Esophagus squamous epithelium (tissue), 5 donors: ENCODE measurements at regions of chr11 and their contacts with region 1.

Region 1: DNA sequence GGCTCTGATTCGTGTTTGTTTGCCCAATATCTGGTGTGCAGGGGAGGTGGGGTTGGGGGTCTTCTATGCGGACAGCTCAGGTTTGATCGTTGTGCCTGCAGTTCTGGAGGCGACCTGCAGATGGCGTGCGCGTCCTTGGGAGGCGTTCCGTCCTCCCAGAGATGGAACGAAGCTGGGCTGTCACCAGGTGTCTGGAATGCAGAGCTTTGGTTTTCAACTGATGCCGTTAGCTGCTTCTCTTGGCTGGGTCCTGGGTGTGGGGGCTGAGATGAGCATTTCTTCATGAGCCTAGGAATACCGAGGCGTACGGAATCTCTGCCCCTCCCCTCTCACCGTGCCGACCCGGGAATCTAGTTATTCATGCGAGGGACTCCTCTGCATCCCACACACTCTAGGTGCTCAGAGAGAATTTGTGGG is 98.6 kb downstream of the CEP164 start:
- DNase-seq: no peak
- H3K4me3 ChIP-seq: peak overlapping the region in 1 of 4 donors; percentile 32
- H3K27ac ChIP-seq: no peak overlapping the region
- H3K4me1 ChIP-seq: peaks cover 0 to 9% (median 0%) of the 10 kb centered on the region in 3 donors
- H3K27me3 ChIP-seq: peaks cover 0 to 23% (median 0%) of the 10 kb centered on the region in 4 donors
- CTCF ChIP-seq: peak; percentile 57 to 96 (median 86)
- POLR2A ChIP-seq: no peak

Region 2: DNA sequence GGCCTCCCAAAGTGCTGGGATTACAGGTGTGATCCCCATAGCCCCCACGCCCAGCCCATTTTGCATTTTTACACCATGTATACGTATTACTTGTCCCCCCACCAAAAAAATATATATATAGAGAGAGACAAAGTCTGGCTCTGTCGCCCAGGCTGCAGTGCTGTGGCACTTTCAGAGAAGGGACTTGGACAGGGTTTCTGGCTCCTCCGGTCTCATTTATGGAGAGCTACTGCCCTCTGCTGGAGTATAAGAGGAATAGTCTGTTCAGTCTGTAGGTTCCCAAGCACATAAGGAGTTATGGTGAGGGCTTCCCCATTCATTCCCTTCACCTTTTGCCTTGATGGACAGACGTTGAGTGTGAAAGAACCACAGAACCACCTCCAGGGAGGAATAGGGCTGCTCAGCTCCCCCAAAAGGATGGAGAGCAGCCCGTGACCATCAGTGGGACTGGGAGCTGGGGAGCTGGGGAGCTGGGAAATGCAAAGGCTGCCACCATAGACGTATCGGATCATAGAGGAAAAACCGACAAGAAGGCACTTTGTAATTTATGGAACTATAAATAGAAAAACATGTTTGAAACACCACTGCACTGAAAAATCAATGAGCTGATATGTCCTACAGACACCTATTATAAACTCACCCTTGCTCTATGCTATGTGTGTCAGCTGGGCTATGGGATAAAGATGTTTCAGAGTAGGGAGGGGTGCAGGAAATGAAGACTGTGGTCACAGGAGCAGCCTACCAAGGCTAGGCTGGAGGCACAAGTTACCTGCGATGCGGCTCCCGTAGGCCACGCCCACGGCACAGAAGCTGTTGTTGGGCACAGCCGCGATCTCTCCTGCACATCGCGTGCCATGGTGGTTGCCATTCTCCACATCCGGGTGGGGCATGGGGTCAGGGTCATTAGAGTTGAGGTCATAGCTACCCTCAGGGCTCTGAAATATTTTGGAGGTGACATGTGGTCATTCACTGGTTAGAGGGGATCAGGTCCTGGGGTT is 199.6 kb before region 1 on chr11:
- intact Hi-C with region 1: no loop called
- DNase-seq: no peak
- H3K4me3 ChIP-seq: no peak overlapping the region
- H3K27ac ChIP-seq: no peak overlapping the region
- H3K4me1 ChIP-seq: peaks cover 15 to 51% (median 17%) of the 10 kb centered on the region in 3 donors
- H3K27me3 ChIP-seq: no peaks in the 10 kb centered on the region
- CTCF ChIP-seq: peak; percentile 52 to 84 (median 77)
- POLR2A ChIP-seq: no peak

Region 3: DNA sequence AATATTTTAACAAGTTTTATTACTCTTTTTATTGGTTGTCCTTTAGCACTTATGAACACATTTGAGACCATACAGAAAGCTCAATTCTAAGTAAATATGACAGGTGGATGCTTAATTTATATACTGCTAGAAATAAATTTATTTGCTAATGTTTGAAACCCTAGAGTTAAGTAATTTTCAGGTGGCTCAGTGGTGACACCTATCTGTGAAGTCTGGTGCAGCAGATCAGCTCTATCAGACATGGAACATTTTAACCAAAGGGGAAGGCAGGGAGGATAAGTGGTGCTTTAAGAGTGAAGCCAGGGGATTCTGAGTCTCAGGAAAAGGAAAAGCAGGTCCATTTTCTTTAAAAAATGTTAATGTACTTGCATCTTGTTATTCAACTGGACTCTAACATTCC is 194.9 kb after region 1 on chr11:
- intact Hi-C with region 1: loop called (anchors 10 kb)
- DNase-seq: no peak
- H3K4me3 ChIP-seq: no peak overlapping the region
- H3K27ac ChIP-seq: no peak overlapping the region
- H3K4me1 ChIP-seq: no peaks in the 10 kb centered on the region
- H3K27me3 ChIP-seq: peaks cover 0 to 24% (median 0%) of the 10 kb centered on the region in 4 donors
- CTCF ChIP-seq: peak in 4 of 6 experiments; percentile 9 to 55 (median 25)
- POLR2A ChIP-seq: no peak

Region 4: DNA sequence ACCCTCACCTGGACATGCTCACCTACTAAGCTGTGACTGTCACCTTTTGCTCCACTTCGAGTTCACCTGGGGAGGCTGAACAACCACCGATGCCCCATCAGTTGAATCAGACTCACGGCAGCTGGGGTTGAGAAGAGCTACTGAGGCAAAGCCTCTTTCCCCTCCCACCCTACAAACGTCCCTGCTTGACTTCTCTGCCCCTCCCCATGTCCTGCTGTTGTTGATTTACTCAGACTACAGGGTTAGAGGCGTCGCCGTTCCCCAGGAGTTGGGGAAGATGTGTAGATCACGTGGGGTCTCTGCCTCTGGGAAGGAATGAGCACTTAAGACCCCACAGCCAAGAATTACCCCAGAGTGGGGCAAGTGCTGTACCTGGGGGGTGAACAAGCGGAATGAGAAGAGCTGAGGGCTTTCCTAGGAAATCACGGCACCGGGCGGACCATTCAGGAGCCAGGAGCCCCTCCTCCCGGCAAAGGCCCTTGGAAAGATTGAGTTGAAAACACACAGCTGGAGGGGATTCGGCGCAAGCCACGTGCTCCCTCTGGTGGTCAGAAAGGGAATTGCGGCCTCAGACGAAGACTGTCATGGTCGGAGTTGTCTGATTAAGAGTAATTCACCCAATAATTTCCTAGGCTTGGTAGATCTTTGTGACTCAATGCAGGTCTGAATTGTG is 391.2 kb after region 1 on chr11:
- intact Hi-C with region 1: loop called (anchors 10 kb)
- DNase-seq: no peak
- H3K4me3 ChIP-seq: peak overlapping the region in 2 of 4 donors; percentile 23 to 50
- H3K27ac ChIP-seq: peak overlapping the region; percentile 55 to 83 (median 71)
- H3K4me1 ChIP-seq: peaks cover 17 to 52% (median 30%) of the 10 kb centered on the region in 3 donors
- H3K27me3 ChIP-seq: no peaks in the 10 kb centered on the region
- CTCF ChIP-seq: peak; percentile 98 to 100 (median 99)
- POLR2A ChIP-seq: no peak